ENCODE measurements at regions of chr4 and their contacts with region 1.

Region 1: GRCh38 chr4:107757864-107758476 is 37.9 kb upstream of the PAPSS1 start:
- H3K4me3 Mint-ChIP-seq: no peak overlapping the region
- H3K27ac Mint-ChIP-seq: peak overlapping the region; percentile 8
- H3K4me1 Mint-ChIP-seq: peaks cover 27% of the 10 kb centered on the region
- H3K27me3 Mint-ChIP-seq: no peaks in the 10 kb centered on the region

Region 2: GRCh38 chr4:107818301-107818910 is 60.4 kb after region 1 on chr4:
- intact Hi-C with region 1: loop called (anchors 5 kb)
- H3K4me3 Mint-ChIP-seq: no peak overlapping the region
- H3K27ac Mint-ChIP-seq: peak overlapping the region; percentile 9
- H3K4me1 Mint-ChIP-seq: peaks cover 32% of the 10 kb centered on the region
- H3K27me3 Mint-ChIP-seq: peaks cover 2% of the 10 kb centered on the region

Region 3: DNA sequence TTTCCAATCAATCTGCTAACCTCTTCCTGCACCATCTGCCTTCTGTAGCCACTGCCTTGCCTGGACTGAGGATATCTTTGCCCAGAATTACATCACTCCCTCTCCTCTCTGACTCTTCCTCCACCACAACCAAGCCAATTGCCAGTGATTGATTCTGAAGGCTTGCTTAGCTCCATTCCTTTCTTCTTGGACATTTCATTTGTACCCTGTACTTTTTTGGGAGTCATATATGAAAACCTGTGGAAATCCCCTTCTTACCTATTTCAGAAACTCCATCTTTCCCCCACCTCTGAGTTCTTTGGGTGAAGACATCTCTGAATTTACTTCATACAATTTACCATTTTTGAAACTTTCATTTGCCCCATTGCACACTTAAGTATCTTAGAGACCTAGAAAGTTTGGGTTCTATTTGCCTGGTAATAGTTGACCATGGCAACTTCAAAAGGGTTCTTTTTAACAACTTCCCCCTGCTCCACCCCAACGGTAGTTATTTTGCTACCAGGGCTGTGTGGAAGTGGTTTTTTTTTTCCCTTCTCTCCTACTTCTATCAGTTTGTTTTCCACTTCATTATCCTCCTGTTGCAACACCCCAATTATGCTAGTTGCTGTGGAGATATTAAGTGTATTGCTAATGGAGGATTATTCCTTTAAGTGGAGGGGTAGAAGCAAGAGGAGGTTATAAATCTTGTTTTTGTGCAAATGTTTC is 81.0 kb after region 1 on chr4:
- intact Hi-C with region 1: loop called (anchors 5 kb)
- H3K4me3 Mint-ChIP-seq: no peak overlapping the region
- H3K27ac Mint-ChIP-seq: no peak overlapping the region
- H3K4me1 Mint-ChIP-seq: peaks cover 40% of the 10 kb centered on the region
- H3K27me3 Mint-ChIP-seq: no peaks in the 10 kb centered on the region

Region 4: DNA sequence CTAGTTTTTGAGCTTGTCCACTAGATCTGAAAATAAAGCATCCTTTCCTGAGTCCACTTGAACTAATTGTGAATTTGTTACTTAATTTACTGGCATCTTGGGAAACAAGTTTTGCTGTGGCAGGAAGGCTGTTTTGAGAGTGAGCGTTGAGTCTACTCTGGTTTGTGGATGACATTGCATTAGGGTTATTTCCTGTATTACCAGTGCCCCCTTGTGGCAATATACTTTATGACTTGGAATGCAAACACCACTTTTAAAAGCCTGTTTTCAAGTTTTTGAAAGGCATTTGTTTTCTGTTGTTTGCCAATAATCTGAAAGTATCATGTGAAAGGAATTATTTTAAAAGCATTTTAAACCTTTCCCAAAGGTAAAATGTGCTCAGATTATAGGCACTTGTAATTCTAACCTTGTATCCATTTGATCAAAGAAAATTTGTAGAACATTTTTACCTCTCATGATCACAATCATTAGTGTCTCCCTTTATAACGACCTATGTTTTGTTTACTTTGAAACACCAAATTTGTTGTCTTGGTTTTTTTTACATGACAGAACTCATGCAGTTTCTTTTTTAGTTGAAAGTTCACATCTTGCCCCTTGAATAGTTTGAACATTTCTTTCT is 155.4 kb after region 1 on chr4:
- intact Hi-C with region 1: loop called (anchors 1 kb)
- H3K4me3 Mint-ChIP-seq: no peak overlapping the region
- H3K27ac Mint-ChIP-seq: no peak overlapping the region
- H3K4me1 Mint-ChIP-seq: peaks cover 9% of the 10 kb centered on the region
- H3K27me3 Mint-ChIP-seq: no peaks in the 10 kb centered on the region

Region 5: GRCh38 chr4:107951551-107951950 is 193.6 kb after region 1 on chr4:
- intact Hi-C with region 1: no loop called
- H3K4me3 Mint-ChIP-seq: no peak overlapping the region
- H3K27ac Mint-ChIP-seq: no peak overlapping the region
- H3K4me1 Mint-ChIP-seq: no peaks in the 10 kb centered on the region
- H3K27me3 Mint-ChIP-seq: no peaks in the 10 kb centered on the region

Measured in dendritic cell treated with granulocyte-macrophage colony-stimulating factor and Interleukin-4, amounts not matched to agents 40 ng/mL and 50 ng/mL, for 4 days (primary cell).